ENCODE measurements at regions of chr10 and their contacts with region 1.

Region 1: DNA sequence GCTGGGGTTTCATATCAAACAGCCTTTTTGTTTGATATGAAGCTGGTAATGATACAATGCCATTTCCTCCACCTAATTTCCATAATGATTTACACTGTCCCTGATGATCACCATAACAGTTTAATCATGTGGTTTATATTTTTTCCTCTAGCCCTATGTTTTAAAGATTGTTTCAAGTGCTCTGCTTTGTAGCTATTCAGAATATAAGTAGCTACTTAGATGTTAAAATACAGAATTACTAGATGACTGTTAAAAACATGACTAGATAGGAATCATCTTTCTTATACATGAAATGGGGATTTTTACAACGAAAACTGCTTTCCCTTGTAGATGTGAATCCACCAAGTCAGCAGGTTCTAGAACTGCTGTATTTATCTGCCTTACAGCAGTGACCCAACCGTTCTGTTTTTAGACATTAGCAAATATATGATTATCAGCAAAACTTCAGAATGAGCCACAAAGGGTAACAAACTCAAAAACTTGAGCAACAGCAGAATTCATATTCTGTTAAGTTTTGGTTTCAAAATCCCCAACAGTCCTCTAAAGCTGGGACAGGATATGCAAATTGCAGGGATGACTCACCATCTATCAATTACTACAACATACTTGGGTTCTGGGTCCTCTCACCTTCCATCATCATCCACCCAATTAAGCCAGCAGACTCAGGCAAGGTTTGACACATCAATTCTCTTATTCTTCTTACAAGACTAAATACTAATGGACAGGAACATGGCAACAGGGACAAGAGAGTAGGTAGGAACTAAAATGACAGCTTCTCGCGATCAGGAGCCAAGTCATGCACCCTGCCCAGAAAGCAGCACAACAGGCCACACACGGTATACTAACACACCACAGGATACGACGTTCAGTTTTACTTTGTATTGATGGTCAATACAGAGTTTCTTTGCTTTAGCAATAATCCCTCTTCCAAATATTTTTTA is 83.9 kb downstream of the PIP4K2A start:
- DNase-seq: peak; percentile 73
- H3K4me3 Mint-ChIP-seq: peak overlapping the region; percentile 67
- H3K27ac Mint-ChIP-seq: peak overlapping the region; percentile 93
- H3K4me1 Mint-ChIP-seq: peaks cover 95% of the 10 kb centered on the region
- H3K27me3 Mint-ChIP-seq: no peaks in the 10 kb centered on the region

Region 2: DNA sequence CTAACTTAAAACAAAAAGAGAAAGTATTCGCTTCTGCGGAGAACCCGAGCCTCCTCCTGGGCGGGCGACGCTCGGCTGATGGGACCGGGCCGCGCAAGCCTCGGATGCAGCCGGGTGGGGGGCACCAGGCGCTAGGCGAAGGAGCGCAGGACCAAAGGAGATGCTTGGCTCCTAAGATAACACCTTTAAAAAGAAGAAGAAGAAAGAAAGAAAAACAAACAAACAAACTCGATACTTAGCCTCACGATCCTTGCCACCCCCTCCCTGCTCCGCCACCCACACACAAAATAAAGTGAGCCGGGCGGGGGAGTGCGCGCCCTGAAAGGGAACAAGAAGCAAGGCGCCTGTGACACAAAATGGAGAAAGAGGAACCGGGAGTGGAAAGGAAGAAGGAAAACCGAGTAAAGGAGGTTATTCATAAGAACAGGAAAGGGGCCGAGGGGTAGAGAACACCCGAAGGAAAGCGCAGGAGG is 378.7 kb before region 1 on chr10:
- CTCF ChIA-PET with region 1: no interaction called
- intact Hi-C with region 1: loop called (anchors 1 kb)
- DNase-seq: peak; percentile 74
- H3K4me3 Mint-ChIP-seq: peak overlapping the region; percentile 99
- H3K27ac Mint-ChIP-seq: peak overlapping the region; percentile 99
- H3K4me1 Mint-ChIP-seq: peaks cover 34% of the 10 kb centered on the region
- H3K27me3 Mint-ChIP-seq: peaks cover 5% of the 10 kb centered on the region

Region 3: GRCh38 chr10:22379059-22379458 is 251.4 kb before region 1 on chr10:
- CTCF ChIA-PET with region 1: no interaction called
- intact Hi-C with region 1: no loop called
- DNase-seq: peak; percentile 75
- H3K4me3 Mint-ChIP-seq: no peak overlapping the region
- H3K27ac Mint-ChIP-seq: no peak overlapping the region
- H3K4me1 Mint-ChIP-seq: peaks cover 17% of the 10 kb centered on the region
- H3K27me3 Mint-ChIP-seq: peaks cover 3% of the 10 kb centered on the region

Region 4: DNA sequence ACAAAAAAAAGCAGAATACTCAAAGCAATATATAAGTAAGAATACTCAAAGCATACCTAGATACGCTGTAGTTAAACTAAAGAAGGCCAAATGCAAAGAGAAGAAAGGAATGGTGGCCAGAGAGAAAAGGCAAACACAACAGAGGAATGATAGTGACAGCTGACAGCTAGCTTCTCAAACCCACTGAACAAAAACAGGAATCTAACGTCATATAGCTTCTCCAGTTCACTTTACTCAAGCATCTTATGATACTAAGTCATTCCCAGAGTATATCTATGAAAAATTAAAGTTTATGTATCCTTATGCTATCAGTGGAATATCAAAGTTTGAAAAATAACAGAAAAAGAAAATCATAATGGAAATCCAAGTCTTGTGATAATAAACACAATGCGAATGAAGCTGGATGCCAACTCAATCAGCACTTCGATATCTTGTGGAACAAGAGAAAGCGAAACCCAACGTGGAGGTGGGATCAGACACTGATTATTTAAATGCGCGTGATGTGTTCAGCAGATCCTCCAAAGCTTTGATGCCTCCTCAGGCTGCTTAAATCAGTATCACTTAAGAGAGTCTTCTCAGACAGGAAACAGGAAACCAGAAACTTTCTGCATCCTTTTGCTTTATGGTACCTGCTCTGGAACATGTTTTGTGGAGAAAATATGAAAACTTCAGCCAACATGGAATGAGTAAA is 18.9 kb before region 1 on chr10:
- CTCF ChIA-PET with region 1: interaction called, 6 read pairs
- intact Hi-C with region 1: loop called (anchors 1 kb)
- DNase-seq: peak; percentile 78
- H3K4me3 Mint-ChIP-seq: peak overlapping the region; percentile 41
- H3K27ac Mint-ChIP-seq: peak overlapping the region; percentile 79
- H3K4me1 Mint-ChIP-seq: peaks cover 86% of the 10 kb centered on the region
- H3K27me3 Mint-ChIP-seq: no peaks in the 10 kb centered on the region

Region 5: DNA sequence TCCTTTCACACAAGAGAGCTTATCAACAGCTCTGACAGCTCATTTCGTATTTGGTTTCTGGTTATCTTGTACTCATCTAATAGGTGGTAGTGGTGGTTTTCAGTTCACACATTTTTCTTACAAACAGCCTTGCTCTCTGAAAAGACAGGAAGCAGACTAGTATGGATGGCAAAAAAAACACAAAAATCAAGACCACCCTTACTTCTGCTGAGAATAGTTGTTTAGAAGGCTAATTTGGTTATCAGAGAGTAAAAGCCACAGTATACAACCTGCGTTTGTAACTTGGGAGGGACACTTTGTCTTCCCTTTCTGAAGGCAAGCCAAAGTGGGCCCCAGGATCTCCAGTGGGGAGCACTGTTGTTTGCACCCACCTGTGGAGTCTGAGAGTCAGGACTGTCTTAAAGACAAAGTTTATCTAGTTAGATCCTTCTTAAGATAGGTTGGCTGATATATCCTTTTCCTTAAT is 15.9 kb after region 1 on chr10:
- CTCF ChIA-PET with region 1: interaction called, 5 read pairs
- intact Hi-C with region 1: loop called (anchors 1 kb)
- DNase-seq: no peak
- H3K4me3 Mint-ChIP-seq: peak overlapping the region; percentile 30
- H3K27ac Mint-ChIP-seq: peak overlapping the region; percentile 90
- H3K4me1 Mint-ChIP-seq: peaks cover 86% of the 10 kb centered on the region
- H3K27me3 Mint-ChIP-seq: no peaks in the 10 kb centered on the region

Region 6: DNA sequence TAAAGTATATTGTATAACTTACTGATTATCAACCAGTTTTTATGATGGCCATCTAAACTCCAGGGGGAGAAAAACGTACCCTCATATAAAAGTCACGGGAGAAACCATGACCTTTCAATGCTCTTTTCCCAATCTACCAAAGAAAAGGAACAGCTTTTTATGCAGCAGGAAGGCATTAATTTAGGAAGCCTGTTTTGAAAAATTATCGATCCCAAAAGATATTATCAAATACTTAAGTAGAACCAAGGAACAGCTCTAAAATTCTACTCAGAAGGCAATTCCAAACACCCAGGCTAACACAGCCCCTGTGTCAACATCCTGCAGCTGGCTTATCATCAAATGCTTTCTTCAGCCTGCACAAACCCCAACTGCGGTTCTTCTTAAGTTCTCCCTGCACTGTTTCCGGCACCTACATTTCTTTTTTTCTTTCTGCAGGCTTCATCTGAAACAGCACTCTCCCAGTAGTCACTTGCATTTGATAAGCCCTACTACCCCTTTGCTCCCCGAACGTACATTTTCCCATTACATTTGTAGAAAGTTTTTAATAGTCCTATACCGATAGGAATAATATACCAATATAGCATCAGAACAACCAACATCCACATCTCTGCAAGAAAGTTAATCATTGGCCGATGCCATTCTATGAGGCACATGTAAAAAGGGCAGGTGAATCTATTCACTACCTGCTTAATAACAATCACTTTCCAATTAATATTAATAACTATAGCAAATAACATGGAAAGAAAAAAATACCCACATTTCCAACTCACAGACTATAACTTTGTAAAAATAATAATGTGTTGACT is 36.0 kb after region 1 on chr10:
- CTCF ChIA-PET with region 1: interaction called, 3 read pairs
- intact Hi-C with region 1: loop called (anchors 1 kb)
- DNase-seq: peak; percentile 74
- H3K4me3 Mint-ChIP-seq: peak overlapping the region; percentile 73
- H3K27ac Mint-ChIP-seq: peak overlapping the region; percentile 74
- H3K4me1 Mint-ChIP-seq: peaks cover 76% of the 10 kb centered on the region
- H3K27me3 Mint-ChIP-seq: no peaks in the 10 kb centered on the region

Region 7: DNA sequence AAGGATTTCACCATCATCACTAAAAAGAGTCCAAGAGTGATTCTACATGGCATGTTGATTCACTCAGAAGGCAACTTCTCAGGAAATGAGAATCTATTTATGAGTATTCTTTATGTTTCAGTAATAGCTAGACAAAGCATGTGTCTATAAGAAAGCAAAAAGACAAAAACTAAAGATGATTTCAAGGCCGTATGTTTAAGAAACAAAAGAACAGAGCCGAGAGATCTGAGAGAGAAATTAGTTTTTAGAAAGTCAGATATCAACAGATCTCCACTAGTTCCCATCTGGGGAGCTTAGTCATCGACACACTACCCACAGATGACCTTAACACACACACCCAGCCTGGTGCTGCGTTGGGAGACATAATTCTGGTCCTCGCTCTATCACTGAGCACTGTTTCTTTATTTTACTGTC is 62.9 kb after region 1 on chr10:
- CTCF ChIA-PET with region 1: no interaction called
- intact Hi-C with region 1: loop called (anchors 1 kb)
- DNase-seq: peak; percentile 42
- H3K4me3 Mint-ChIP-seq: peak overlapping the region; percentile 25
- H3K27ac Mint-ChIP-seq: peak overlapping the region; percentile 85
- H3K4me1 Mint-ChIP-seq: peaks cover 84% of the 10 kb centered on the region
- H3K27me3 Mint-ChIP-seq: no peaks in the 10 kb centered on the region

Region 8: DNA sequence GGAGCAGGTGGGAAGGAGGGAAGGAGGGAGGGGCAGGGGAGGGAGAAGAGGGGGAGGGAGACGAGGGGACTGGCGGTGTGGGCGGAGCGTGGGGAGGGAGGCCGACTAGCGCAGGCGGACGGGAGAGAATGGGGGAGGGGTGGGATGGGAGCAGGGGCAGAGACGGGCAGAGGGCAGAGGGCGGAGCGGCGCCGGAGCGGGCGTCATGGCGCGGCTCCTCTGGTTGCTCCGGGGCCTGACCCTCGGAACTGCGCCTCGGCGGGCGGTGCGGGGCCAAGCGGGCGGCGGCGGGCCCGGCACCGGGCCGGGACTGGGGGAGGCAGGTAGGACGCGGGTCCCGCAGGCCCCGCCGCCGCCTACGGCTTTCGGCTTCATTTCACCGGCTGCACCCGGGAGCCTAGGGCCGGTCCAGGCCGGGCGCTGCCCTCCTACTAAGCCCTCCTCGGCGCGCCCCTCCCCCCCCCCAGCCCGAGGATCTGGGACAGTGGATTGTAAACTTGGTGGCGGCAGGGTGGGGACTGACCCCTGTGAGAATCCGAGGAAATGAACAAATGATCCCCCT is 465.0 kb after region 1 on chr10 and contains the start of gene MSRB2:
- CTCF ChIA-PET with region 1: no interaction called
- intact Hi-C with region 1: loop called (anchors 1 kb)
- DNase-seq: peak; percentile 92
- H3K4me3 Mint-ChIP-seq: peak within 1 kb of the TSS; percentile 97
- H3K27ac Mint-ChIP-seq: peak within 1 kb of the TSS; percentile 90
- H3K4me1 Mint-ChIP-seq: peaks cover 34% of the 10 kb centered on the region
- H3K27me3 Mint-ChIP-seq: no peaks in the 10 kb centered on the region
- total RNA-seq, gene MSRB2: 13.9 to 16.0 TPM